ENCODE measurements at regions of chr1 and their contacts with region 1.

Region 1: GRCh38 chr1:85048296-85049064 is at the start of gene MCOLN3:
- DNase-seq: peak in 7 of 9 experiments; percentile 23 to 57 (median 34)
- ATAC-seq: peak; percentile 66
- H3K4me3 ChIP-seq: peak within 1 kb of the TSS; percentile 41 to 50
- H3K4me3 Mint-ChIP-seq: peak within 1 kb of the TSS; percentile 80
- H3K27ac ChIP-seq: no peak within 1 kb of the TSS
- H3K27ac Mint-ChIP-seq: no peak within 1 kb of the TSS
- H3K4me1 ChIP-seq: peaks cover 21% of the 10 kb centered on the region
- H3K4me1 Mint-ChIP-seq: peaks cover 31% of the 10 kb centered on the region
- H3K27me3 ChIP-seq: peaks cover 12 to 27% of the 10 kb centered on the region in 2 experiments
- H3K27me3 Mint-ChIP-seq: peaks cover 40% of the 10 kb centered on the region
- CTCF ChIP-seq: no peak
- total RNA-seq, gene MCOLN3: 0.11 to 0.14 TPM

Region 2: GRCh38 chr1:84884656-84885389 is 163.7 kb before region 1 on chr1:
- CTCF ChIA-PET with region 1: no interaction called
- POLR2A ChIA-PET with region 1: no interaction called
- intact Hi-C with region 1: no loop called
- DNase-seq: no peak
- ATAC-seq: no peak
- H3K4me3 ChIP-seq: no peak overlapping the region
- H3K4me3 Mint-ChIP-seq: no peak overlapping the region
- H3K27ac ChIP-seq: no peak overlapping the region
- H3K27ac Mint-ChIP-seq: no peak overlapping the region
- H3K4me1 ChIP-seq: no peaks in the 10 kb centered on the region
- H3K4me1 Mint-ChIP-seq: peaks cover 5% of the 10 kb centered on the region
- H3K27me3 ChIP-seq: no peaks in the 10 kb centered on the region
- H3K27me3 Mint-ChIP-seq: no peaks in the 10 kb centered on the region
- CTCF ChIP-seq: no peak

Region 3: DNA sequence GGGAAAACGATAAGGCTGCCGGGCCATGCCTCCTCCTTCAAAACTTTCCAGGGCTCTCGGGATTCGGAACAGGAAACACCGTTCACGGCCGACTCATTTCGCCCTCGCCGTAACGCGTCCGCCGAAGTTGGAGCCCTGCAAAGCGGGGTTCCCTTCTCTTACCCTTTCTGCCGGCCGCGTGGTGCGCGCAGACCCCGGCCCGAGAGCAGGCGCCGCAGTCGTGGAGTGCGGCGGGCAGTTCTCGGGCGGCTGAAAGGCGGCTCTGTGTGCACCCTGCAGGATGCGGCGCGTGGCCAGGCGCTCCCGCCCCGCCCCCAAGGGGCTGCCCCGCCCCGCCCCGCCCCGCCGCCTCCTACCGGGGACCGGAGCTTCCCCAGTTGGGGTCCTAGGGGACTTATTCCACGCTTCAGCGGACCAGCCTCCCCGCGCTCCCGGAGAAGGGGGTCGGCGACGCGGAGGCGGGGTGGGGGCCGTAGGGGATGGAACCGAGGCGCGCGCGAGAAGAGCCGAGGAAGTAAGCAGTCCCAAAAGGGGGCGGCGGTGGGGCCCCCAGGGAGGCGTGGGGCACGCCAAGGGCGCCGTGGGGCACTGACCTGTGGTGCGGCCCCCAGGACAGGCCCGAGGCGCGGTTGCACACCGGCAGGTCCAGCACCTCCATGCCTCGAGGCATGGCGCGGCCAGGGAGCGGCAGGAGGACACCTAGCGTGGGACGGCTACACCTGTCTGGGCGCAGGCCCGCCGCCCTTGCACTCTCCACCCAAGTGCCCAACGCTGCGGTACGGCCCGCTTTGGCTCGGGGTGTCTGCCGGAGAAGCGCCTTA is 51.4 kb before region 1 on chr1 and contains the start of gene MCOLN2:
- CTCF ChIA-PET with region 1: no interaction called
- POLR2A ChIA-PET with region 1: no interaction called
- intact Hi-C with region 1: loop called in 1 of 2 experiments (anchors 5 kb)
- DNase-seq: peak; percentile 16 to 77 (median 51)
- ATAC-seq: peak; percentile 69
- H3K4me3 ChIP-seq: peak within 1 kb of the TSS; percentile 66 to 84
- H3K4me3 Mint-ChIP-seq: peak within 1 kb of the TSS; percentile 84
- H3K27ac ChIP-seq: peak within 1 kb of the TSS; percentile 28 to 81
- H3K27ac Mint-ChIP-seq: peak within 1 kb of the TSS; percentile 57
- H3K4me1 ChIP-seq: peaks cover 20% of the 10 kb centered on the region
- H3K4me1 Mint-ChIP-seq: peaks cover 34% of the 10 kb centered on the region
- H3K27me3 ChIP-seq: no peaks in the 10 kb centered on the region
- H3K27me3 Mint-ChIP-seq: peaks cover 23% of the 10 kb centered on the region
- CTCF ChIP-seq: no peak
- total RNA-seq, gene MCOLN2: 12.7 to 23.1 TPM

Region 4: DNA sequence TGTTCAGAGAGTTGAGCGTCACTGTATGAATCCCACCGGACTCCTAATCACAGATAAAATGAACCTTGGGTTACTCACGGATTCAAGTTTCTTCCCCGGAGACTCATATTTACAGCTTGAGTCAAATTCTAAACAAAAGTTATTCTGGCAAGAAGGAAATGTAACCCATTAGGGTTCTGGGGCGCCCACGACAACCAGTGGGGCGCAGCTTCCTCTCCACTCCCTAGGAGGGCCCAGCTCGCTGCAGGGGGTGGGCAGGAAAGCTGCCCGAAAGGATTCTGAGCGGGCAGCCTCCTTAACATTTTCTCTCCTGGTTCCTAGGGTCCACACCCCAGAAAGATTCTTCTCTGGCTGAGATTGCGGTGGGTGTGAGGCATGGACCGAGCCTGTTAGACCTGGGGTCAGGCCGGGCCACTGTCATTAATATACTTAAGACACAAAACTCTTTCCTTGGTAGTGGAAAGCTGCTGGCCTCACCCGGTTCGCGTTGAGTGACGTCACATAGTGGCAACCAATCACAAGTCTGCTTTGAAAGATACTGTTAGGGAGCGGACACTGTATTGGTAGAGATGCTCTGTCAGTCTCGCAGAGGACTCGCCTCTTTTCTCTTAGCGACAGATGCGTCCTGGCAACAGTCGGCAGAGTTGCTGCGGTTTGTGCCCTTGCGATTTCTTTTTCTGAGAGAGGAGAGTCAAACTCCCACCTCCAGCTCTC is 13.4 kb after region 1 on chr1:
- CTCF ChIA-PET with region 1: interaction called, 3 read pairs
- POLR2A ChIA-PET with region 1: no interaction called
- intact Hi-C with region 1: loop called in 1 of 2 experiments (anchors 2 kb)
- DNase-seq: peak; percentile 64 to 96 (median 81)
- ATAC-seq: peak; percentile 99
- H3K4me3 ChIP-seq: peak overlapping the region; percentile 38 to 49
- H3K4me3 Mint-ChIP-seq: peak overlapping the region; percentile 84
- H3K27ac ChIP-seq: peak overlapping the region in 1 of 2 experiments; percentile 29
- H3K27ac Mint-ChIP-seq: peak overlapping the region; percentile 72
- H3K4me1 ChIP-seq: peaks cover 4% of the 10 kb centered on the region
- H3K4me1 Mint-ChIP-seq: peaks cover 14% of the 10 kb centered on the region
- H3K27me3 ChIP-seq: no peaks in the 10 kb centered on the region
- H3K27me3 Mint-ChIP-seq: peaks cover 12% of the 10 kb centered on the region
- CTCF ChIP-seq: no peak